IMR-90 (cell line): ENCODE measurements at regions of chrX and their contacts with region 1.

Region 1: DNA sequence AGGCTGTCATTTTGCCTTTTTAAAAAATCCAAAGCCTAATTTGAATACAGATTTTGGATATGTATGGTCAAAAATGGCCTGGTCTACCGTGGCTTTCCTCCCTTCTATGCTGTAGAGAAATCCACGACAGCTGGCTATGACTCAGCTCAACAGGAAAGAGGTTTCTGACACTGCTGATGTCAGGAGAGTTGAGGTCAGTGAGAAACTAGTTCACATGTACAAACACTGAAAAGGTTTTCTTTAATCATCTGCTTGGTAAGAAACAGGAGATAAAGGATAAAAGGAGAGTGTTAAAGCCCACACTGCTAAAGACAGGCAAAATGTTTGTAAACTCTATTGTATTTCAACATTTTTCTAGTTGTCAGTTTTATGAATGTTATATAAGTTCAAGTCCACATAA is 113.9 kb downstream of the NYX start:
- DNase-seq: peak; percentile 95
- ATAC-seq: peak; percentile 80
- H3K4me3 ChIP-seq: no peak overlapping the region
- H3K27ac ChIP-seq: peak overlapping the region; percentile 69; the same call in 1 of the 2 replicates
- H3K4me1 ChIP-seq: peaks cover 3% of the 10 kb centered on the region
- H3K27me3 ChIP-seq: no peaks in the 10 kb centered on the region; the same call in 1 of the 2 replicates
- CTCF ChIP-seq: no peak
- POLR2A ChIP-seq: no peak
- RAD21 ChIP-seq: no peak

Region 2: DNA sequence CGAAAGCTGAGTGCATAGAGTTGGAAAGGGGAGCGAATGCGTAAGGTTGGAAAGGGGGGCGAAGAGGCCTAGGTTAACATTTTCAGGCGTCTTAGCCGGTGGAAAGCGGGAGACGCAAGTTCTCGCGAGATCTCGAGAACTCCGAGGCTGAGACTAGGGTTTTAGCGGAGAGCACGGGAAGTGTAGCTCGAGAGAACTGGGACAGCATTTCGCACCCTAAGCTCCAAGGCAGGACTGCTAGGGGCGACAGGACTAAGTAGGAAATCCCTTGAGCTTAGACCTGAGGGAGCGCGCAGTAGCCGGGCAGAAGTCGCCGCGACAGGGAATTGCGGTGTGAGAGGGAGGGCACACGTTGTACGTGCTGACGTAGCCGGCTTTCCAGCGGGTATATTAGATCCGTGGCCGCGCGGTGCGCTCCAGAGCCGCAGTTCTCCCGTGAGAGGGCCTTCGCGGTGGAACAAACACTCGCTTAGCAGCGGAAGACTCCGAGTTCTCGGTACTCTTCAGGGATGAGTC is 227.2 kb before region 1 on chrX and contains the start of gene DDX3X:
- CTCF ChIA-PET with region 1: no interaction called
- POLR2A ChIA-PET with region 1: no interaction called
- dilution Hi-C with region 1: no loop called
- in situ Hi-C with region 1: no loop called
- intact Hi-C with region 1: loop called (anchors 5 kb)
- DNase-seq: peak; percentile 91
- ATAC-seq: peak; percentile 72
- H3K4me3 ChIP-seq: peak within 1 kb of the TSS; percentile 68
- H3K27ac ChIP-seq: peak within 1 kb of the TSS; percentile 94
- H3K4me1 ChIP-seq: peaks cover 5% of the 10 kb centered on the region; the same call in 1 of the 2 replicates
- H3K27me3 ChIP-seq: no peaks in the 10 kb centered on the region
- CTCF ChIP-seq: peak; percentile 36
- POLR2A ChIP-seq: peak; percentile 100
- RAD21 ChIP-seq: no peak
- total RNA-seq, gene DDX3X: 229 and 448 TPM in 2 replicates

Region 3: GRCh38 chrX:41421071-41421729 is 139.8 kb before region 1 on chrX:
- CTCF ChIA-PET with region 1: no interaction called
- POLR2A ChIA-PET with region 1: no interaction called
- dilution Hi-C with region 1: no loop called
- in situ Hi-C with region 1: no loop called
- intact Hi-C with region 1: no loop called
- DNase-seq: no peak
- ATAC-seq: no peak
- H3K4me3 ChIP-seq: no peak overlapping the region
- H3K27ac ChIP-seq: no peak overlapping the region
- H3K4me1 ChIP-seq: no peaks in the 10 kb centered on the region
- H3K27me3 ChIP-seq: peaks cover 3% of the 10 kb centered on the region
- CTCF ChIP-seq: no peak
- POLR2A ChIP-seq: no peak
- RAD21 ChIP-seq: no peak

Region 4: GRCh38 chrX:41580423-41581064 is 19.5 kb after region 1 on chrX:
- CTCF ChIA-PET with region 1: no interaction called
- POLR2A ChIA-PET with region 1: no interaction called
- dilution Hi-C with region 1: no loop called
- in situ Hi-C with region 1: no loop called
- intact Hi-C with region 1: no loop called
- DNase-seq: no peak
- ATAC-seq: no peak
- H3K4me3 ChIP-seq: no peak overlapping the region
- H3K27ac ChIP-seq: no peak overlapping the region
- H3K4me1 ChIP-seq: no peaks in the 10 kb centered on the region
- H3K27me3 ChIP-seq: peaks cover 3% of the 10 kb centered on the region; the same call in 1 of the 2 replicates
- CTCF ChIP-seq: no peak
- POLR2A ChIP-seq: no peak
- RAD21 ChIP-seq: no peak

Region 5: GRCh38 chrX:41759817-41760216 is 198.8 kb after region 1 on chrX:
- CTCF ChIA-PET with region 1: interaction called, 4 read pairs
- POLR2A ChIA-PET with region 1: no interaction called
- dilution Hi-C with region 1: no loop called
- in situ Hi-C with region 1: no loop called
- intact Hi-C with region 1: loop called (anchors 1 kb)
- DNase-seq: peak; percentile 54
- ATAC-seq: no peak
- H3K4me3 ChIP-seq: no peak overlapping the region
- H3K27ac ChIP-seq: no peak overlapping the region
- H3K4me1 ChIP-seq: no peaks in the 10 kb centered on the region
- H3K27me3 ChIP-seq: peaks cover 1% of the 10 kb centered on the region; the same call in 1 of the 2 replicates
- CTCF ChIP-seq: peak; percentile 57
- POLR2A ChIP-seq: no peak
- RAD21 ChIP-seq: peak; percentile 59

Region 6: GRCh38 chrX:41923257-41923969 is 362.4 kb after region 1 on chrX and contains the start of gene CASK:
- CTCF ChIA-PET with region 1: no interaction called
- POLR2A ChIA-PET with region 1: no interaction called
- dilution Hi-C with region 1: no loop called
- in situ Hi-C with region 1: no loop called
- intact Hi-C with region 1: loop called (anchors 2 kb)
- DNase-seq: peak; percentile 87
- ATAC-seq: peak; percentile 97
- H3K4me3 ChIP-seq: peak within 1 kb of the TSS; percentile 92
- H3K27ac ChIP-seq: peak within 1 kb of the TSS; percentile 82
- H3K4me1 ChIP-seq: no peaks in the 10 kb centered on the region
- H3K27me3 ChIP-seq: peaks cover 11% of the 10 kb centered on the region
- CTCF ChIP-seq: no peak
- POLR2A ChIP-seq: no peak
- RAD21 ChIP-seq: no peak
- total RNA-seq, gene CASK: 17.7 and 21.9 TPM in 2 replicates